ENCODE measurements at regions of chr3 and their contacts with region 1.

Region 1: GRCh38 chr3:153161138-153161713 is 800 bp upstream of the RAP2B start:
- DNase-seq: peak; percentile 93 to 97 (median 96)
- ATAC-seq: peak; percentile 92 to 97 (median 94)
- H3K4me3 ChIP-seq: peak overlapping the region; percentile 44 to 98 (median 82)
- H3K27ac ChIP-seq: peak overlapping the region; percentile 57 to 98 (median 88)
- H3K4me1 ChIP-seq: peaks cover 0 to 33% (median 19%) of the 10 kb centered on the region in 12 donors
- H3K27me3 ChIP-seq: no peaks in the 10 kb centered on the region
- CTCF ChIP-seq: no peak
- POLR2A ChIP-seq: peak in 1 of 2 donors; percentile 71

Region 2: GRCh38 chr3:153043729-153044328 is 117.4 kb before region 1 on chr3:
- intact Hi-C with region 1: loop called in 6 of 10 experiments (anchors 2 to 10 kb)
- DNase-seq: no peak
- ATAC-seq: peak in 1 of 4 donors; percentile 54
- H3K4me3 ChIP-seq: peak overlapping the region in 2 of 12 donors; percentile 18 to 43
- H3K27ac ChIP-seq: peak overlapping the region in 1 of 12 donors; percentile 64
- H3K4me1 ChIP-seq: peaks cover 0 to 11% (median 0%) of the 10 kb centered on the region in 12 donors
- H3K27me3 ChIP-seq: no peaks in the 10 kb centered on the region
- CTCF ChIP-seq: no peak
- POLR2A ChIP-seq: no peak

Region 3: GRCh38 chr3:153221748-153222162 is 60.5 kb after region 1 on chr3:
- intact Hi-C with region 1: loop called in 3 of 10 experiments (anchors 5 to 10 kb)
- DNase-seq: peak; percentile 70 to 77 (median 73)
- ATAC-seq: peak; percentile 97 to 100 (median 100)
- H3K4me3 ChIP-seq: peak overlapping the region in 5 of 12 donors; percentile 1 to 17 (median 11)
- H3K27ac ChIP-seq: peak overlapping the region; percentile 40 to 95 (median 68)
- H3K4me1 ChIP-seq: peaks cover 0 to 38% (median 8%) of the 10 kb centered on the region in 12 donors
- H3K27me3 ChIP-seq: no peaks in the 10 kb centered on the region
- CTCF ChIP-seq: no peak
- POLR2A ChIP-seq: no peak

Region 4: GRCh38 chr3:153291056-153291685 is 129.9 kb after region 1 on chr3:
- intact Hi-C with region 1: loop called in 7 of 10 experiments (anchors 2 to 10 kb)
- DNase-seq: no peak
- ATAC-seq: peak in 1 of 4 donors; percentile 57
- H3K4me3 ChIP-seq: no peak overlapping the region
- H3K27ac ChIP-seq: peak overlapping the region in 1 of 12 donors; percentile 42
- H3K4me1 ChIP-seq: peaks cover 0 to 52% (median 0%) of the 10 kb centered on the region in 12 donors
- H3K27me3 ChIP-seq: no peaks in the 10 kb centered on the region
- CTCF ChIP-seq: peak in 11 of 12 donors; percentile 9 to 60 (median 40)
- POLR2A ChIP-seq: no peak

Region 5: GRCh38 chr3:153528473-153528872 is 367.2 kb after region 1 on chr3:
- intact Hi-C with region 1: no loop called
- DNase-seq: no peak
- ATAC-seq: no peak
- H3K4me3 ChIP-seq: no peak overlapping the region
- H3K27ac ChIP-seq: no peak overlapping the region
- H3K4me1 ChIP-seq: no peaks in the 10 kb centered on the region
- H3K27me3 ChIP-seq: no peaks in the 10 kb centered on the region
- CTCF ChIP-seq: no peak
- POLR2A ChIP-seq: no peak

Region 6: DNA sequence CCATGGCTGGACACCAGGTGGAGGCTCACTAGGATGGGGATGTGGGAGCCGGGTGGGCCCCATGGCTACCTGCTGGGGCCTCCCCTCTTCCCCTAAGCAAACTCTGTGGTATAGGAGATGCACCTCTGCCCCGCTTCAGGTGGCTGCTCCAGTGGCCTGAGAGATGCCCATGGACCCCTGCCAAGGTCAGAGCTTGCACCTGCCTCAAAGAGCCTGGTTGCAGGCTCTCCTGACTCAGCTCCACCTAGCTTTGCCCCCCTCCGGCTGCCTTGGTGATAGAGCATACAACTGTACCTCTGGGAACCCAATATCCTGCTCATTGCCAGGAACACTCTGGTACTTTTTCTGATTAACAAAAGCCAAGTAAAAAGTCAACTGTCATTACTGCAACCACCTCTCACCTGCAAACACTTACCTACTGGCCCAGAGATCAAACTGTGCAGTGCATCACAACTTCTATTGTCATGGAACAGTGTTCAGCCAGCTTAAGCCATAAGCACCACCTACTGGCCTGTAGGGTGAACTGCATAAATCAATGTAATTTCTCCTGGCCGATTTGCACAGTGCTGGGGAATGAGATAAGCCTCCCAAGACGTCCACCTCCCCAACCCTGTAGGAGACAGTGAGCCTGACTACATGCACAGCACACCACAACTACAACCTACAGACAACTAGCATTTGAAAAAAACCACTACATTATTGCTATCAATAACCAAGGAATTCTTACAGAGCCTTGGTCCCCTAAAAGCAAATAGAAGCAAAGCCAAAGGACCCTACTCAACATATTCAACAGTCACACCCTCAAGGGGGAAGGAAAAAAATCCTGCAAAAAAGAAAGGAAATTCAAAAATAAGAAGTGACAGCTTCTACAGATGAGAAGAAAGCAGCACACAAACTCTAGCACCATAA is 607.6 kb after region 1 on chr3:
- intact Hi-C with region 1: loop called in 1 of 10 experiments (anchors 5 kb)
- DNase-seq: peak in 1 of 5 donors; percentile 17
- ATAC-seq: peak; percentile 69 to 85 (median 84)
- H3K4me3 ChIP-seq: no peak overlapping the region
- H3K27ac ChIP-seq: no peak overlapping the region
- H3K4me1 ChIP-seq: no peaks in the 10 kb centered on the region
- H3K27me3 ChIP-seq: no peaks in the 10 kb centered on the region
- CTCF ChIP-seq: peak; percentile 71 to 84 (median 78)
- POLR2A ChIP-seq: no peak

Measured in heart left ventricle (tissue), 16 donors.